ENCODE measurements at regions of chr12 and their contacts with region 1.

Region 1: DNA sequence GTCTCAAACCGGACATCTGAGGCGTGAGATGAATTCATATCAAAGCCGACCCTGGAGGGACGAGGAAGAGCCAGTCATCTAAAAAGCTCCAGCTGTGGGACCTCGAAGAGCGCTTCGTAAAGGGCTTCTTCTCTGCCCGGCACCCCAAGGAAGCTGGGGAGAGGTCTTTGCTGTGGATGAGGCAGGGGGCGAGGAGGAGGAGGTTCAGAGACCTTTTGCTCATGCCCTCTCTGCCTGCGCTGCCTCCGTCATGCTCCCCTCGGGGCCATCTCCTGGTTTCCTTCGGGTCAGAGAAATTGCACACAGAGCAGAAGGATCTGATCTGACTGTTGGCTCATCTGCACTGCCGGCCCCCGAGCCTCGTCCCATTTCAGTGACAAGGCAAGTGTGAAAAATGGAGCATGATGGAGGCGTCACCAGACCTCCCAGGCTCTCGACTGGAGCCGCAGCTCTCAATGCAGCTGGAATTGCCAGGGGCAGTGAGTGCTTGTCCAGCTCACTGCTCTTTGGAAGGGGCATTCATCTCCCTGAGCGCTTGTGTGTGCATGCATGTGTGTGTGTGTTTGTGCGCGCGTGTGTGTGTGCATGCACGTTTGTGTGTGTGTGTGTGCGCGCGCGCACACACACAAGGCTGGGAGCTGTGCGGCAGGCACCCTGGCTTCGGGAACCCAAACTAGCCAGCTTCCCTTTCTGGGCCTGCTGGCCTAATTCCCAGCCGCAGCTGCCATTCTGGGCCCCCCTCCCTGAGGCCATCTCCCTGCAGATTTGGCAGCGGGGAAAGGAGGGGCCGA is 9.2 kb downstream of the CABP1 start:
- DNase-seq: no peak
- H3K4me3 ChIP-seq: no peak overlapping the region
- H3K4me3 Mint-ChIP-seq: peak overlapping the region in 3 of 8 donors; percentile 65 to 80 (median 73)
- H3K27ac ChIP-seq: no peak overlapping the region
- H3K27ac Mint-ChIP-seq: no peak overlapping the region
- H3K4me1 ChIP-seq: peaks cover 9% of the 10 kb centered on the region
- H3K4me1 Mint-ChIP-seq: peaks cover 8 to 15% (median 11%) of the 10 kb centered on the region in 4 donors
- H3K27me3 ChIP-seq: peaks cover 23% of the 10 kb centered on the region
- H3K27me3 Mint-ChIP-seq: peaks cover 30 to 39% of the 10 kb centered on the region in 2 donors

Region 2: GRCh38 chr12:120356567-120357030 is 293.0 kb before region 1 on chr12:
- CTCF ChIA-PET with region 1: interaction called, 7 read pairs
- POLR2A ChIA-PET with region 1: no interaction called
- intact Hi-C with region 1: loop called (anchors 1 kb)
- DNase-seq: peak; percentile 59 to 66 (median 63)
- H3K4me3 ChIP-seq: no peak overlapping the region
- H3K4me3 Mint-ChIP-seq: no peak overlapping the region
- H3K27ac ChIP-seq: no peak overlapping the region
- H3K27ac Mint-ChIP-seq: peak overlapping the region in 1 of 7 donors; percentile 57
- H3K4me1 ChIP-seq: no peaks in the 10 kb centered on the region
- H3K4me1 Mint-ChIP-seq: peaks cover 0 to 1% (median 0%) of the 10 kb centered on the region in 4 donors
- H3K27me3 ChIP-seq: no peaks in the 10 kb centered on the region
- H3K27me3 Mint-ChIP-seq: peaks cover 9 to 30% of the 10 kb centered on the region in 2 donors

Region 3: GRCh38 chr12:120580787-120581723 is 68.6 kb before region 1 on chr12 and contains the start of gene POP5:
- CTCF ChIA-PET with region 1: interaction called, 110 read pairs
- POLR2A ChIA-PET with region 1: interaction called, 9 read pairs
- intact Hi-C with region 1: loop called (anchors 1 kb)
- DNase-seq: peak; percentile 90 to 96 (median 91)
- H3K4me3 ChIP-seq: peak within 1 kb of the TSS; percentile 90 to 94
- H3K4me3 Mint-ChIP-seq: peak within 1 kb of the TSS; percentile 96 to 99 (median 98)
- H3K27ac ChIP-seq: peak within 1 kb of the TSS; percentile 72
- H3K27ac Mint-ChIP-seq: peak within 1 kb of the TSS; percentile 92 to 98 (median 96)
- H3K4me1 ChIP-seq: peaks cover 34% of the 10 kb centered on the region
- H3K4me1 Mint-ChIP-seq: peaks cover 17 to 43% (median 37%) of the 10 kb centered on the region in 4 donors
- H3K27me3 ChIP-seq: no peaks in the 10 kb centered on the region
- H3K27me3 Mint-ChIP-seq: no peaks in the 10 kb centered on the region
- total RNA-seq, gene POP5: 70.4 to 70.7 TPM

Region 4: DNA sequence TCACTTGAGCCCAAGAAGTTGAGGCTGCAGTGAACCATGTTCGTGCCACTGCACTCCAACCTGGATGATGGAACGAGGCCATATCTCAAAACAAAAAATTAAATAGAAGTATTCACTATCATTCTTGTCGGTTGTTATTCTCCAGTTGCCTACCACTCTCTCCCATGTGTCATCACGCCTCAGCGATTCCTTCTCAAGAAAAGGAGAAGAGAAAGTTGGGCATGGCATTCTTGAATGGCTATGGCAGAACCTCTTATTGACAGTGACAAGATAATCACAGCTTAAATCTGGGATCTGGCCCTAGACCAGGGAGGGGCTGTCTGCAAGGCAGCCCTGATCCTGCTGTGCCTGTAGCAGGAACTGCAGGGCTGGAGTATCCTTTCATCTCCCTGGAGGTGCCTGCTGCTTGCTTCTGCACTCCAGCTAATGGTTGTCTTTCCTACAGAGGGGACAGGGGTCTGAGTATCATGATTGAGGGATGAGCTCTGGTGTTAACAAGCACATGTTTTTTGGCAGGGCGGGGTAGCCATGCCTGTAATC is 24.5 kb after region 1 on chr12:
- CTCF ChIA-PET with region 1: interaction called, 15 read pairs
- POLR2A ChIA-PET with region 1: no interaction called
- intact Hi-C with region 1: no loop called
- DNase-seq: no peak
- H3K4me3 ChIP-seq: no peak overlapping the region
- H3K4me3 Mint-ChIP-seq: no peak overlapping the region
- H3K27ac ChIP-seq: no peak overlapping the region
- H3K27ac Mint-ChIP-seq: no peak overlapping the region
- H3K4me1 ChIP-seq: peaks cover 5% of the 10 kb centered on the region
- H3K4me1 Mint-ChIP-seq: peaks cover 0 to 13% (median 6%) of the 10 kb centered on the region in 4 donors
- H3K27me3 ChIP-seq: no peaks in the 10 kb centered on the region
- H3K27me3 Mint-ChIP-seq: peaks cover 1 to 2% of the 10 kb centered on the region in 2 donors

Region 5: GRCh38 chr12:120710031-120710804 is 60.6 kb after region 1 on chr12 and contains the start of gene UNC119B:
- CTCF ChIA-PET with region 1: interaction called, 65 read pairs
- POLR2A ChIA-PET with region 1: interaction called, 8 read pairs
- intact Hi-C with region 1: loop called (anchors 1 kb)
- DNase-seq: peak; percentile 66 to 78 (median 70)
- H3K4me3 ChIP-seq: peak within 1 kb of the TSS; percentile 49 to 68
- H3K4me3 Mint-ChIP-seq: peak within 1 kb of the TSS; percentile 89 to 96 (median 94)
- H3K27ac ChIP-seq: peak within 1 kb of the TSS; percentile 78
- H3K27ac Mint-ChIP-seq: peak within 1 kb of the TSS; percentile 83 to 98 (median 93)
- H3K4me1 ChIP-seq: peaks cover 26% of the 10 kb centered on the region
- H3K4me1 Mint-ChIP-seq: peaks cover 17 to 41% (median 32%) of the 10 kb centered on the region in 4 donors
- H3K27me3 ChIP-seq: no peaks in the 10 kb centered on the region
- H3K27me3 Mint-ChIP-seq: no peaks in the 10 kb centered on the region
- total RNA-seq, gene UNC119B: 28.7 to 29.1 TPM

Region 6: GRCh38 chr12:120830052-120830940 is 180.7 kb after region 1 on chr12:
- CTCF ChIA-PET with region 1: no interaction called
- POLR2A ChIA-PET with region 1: no interaction called
- intact Hi-C with region 1: no loop called
- DNase-seq: no peak
- H3K4me3 ChIP-seq: no peak overlapping the region
- H3K4me3 Mint-ChIP-seq: peak overlapping the region in 1 of 8 donors; percentile 3
- H3K27ac ChIP-seq: no peak overlapping the region
- H3K27ac Mint-ChIP-seq: peak overlapping the region in 3 of 7 donors; percentile 6 to 41 (median 33)
- H3K4me1 ChIP-seq: peaks cover 39% of the 10 kb centered on the region
- H3K4me1 Mint-ChIP-seq: peaks cover 34 to 68% (median 46%) of the 10 kb centered on the region in 4 donors
- H3K27me3 ChIP-seq: no peaks in the 10 kb centered on the region
- H3K27me3 Mint-ChIP-seq: no peaks in the 10 kb centered on the region

Region 7: DNA sequence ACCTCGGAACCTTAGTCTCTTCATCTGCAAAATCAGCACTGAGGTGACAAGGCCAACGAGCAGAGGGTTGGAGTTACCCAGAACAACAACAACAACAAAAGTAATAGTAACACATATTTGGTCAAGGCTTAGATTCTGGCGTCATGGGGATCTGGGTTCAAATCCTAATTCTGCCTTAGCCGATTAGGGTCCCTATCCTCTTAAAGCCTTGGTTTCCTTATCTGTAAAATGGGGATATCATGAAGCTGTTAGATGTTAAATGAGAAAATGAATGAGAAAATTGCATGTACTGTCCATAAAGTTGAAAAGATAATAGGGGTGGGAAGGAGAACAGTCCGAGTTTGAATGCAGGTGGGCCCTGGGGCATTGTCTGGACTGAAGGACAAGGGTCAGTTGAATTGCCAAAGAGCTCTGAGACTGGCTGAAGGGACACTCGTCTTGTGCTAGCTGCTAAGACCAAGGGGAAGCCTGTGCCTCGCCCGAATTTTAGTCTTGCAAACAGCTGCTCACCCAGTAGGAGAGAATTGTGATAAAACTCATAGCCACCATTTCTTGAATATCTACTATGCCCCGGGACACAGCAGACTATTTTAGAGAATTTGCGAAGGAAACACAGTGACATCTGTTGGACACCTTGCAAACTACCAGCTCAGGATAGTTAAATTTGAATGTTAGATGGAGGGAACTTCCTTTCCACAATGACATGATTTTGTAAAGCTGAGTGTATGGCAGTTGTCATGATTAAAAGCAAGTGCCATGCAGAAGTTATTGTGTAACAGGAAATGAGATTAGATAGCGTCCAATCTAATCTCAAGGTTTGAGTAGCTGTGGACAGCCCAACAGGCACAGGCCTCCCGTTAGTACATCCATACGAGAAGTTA is 321.9 kb after region 1 on chr12:
- CTCF ChIA-PET with region 1: interaction called, 115 read pairs
- POLR2A ChIA-PET with region 1: interaction called, 3 read pairs
- intact Hi-C with region 1: loop called (anchors 1 kb)
- DNase-seq: peak in 4 of 5 donors; percentile 59 to 68 (median 62)
- H3K4me3 ChIP-seq: no peak overlapping the region
- H3K4me3 Mint-ChIP-seq: no peak overlapping the region
- H3K27ac ChIP-seq: no peak overlapping the region
- H3K27ac Mint-ChIP-seq: peak overlapping the region in 2 of 7 donors; percentile 37 to 51
- H3K4me1 ChIP-seq: peaks cover 3% of the 10 kb centered on the region
- H3K4me1 Mint-ChIP-seq: peaks cover 6 to 9% (median 6%) of the 10 kb centered on the region in 4 donors
- H3K27me3 ChIP-seq: no peaks in the 10 kb centered on the region
- H3K27me3 Mint-ChIP-seq: no peaks in the 10 kb centered on the region

Region 8: DNA sequence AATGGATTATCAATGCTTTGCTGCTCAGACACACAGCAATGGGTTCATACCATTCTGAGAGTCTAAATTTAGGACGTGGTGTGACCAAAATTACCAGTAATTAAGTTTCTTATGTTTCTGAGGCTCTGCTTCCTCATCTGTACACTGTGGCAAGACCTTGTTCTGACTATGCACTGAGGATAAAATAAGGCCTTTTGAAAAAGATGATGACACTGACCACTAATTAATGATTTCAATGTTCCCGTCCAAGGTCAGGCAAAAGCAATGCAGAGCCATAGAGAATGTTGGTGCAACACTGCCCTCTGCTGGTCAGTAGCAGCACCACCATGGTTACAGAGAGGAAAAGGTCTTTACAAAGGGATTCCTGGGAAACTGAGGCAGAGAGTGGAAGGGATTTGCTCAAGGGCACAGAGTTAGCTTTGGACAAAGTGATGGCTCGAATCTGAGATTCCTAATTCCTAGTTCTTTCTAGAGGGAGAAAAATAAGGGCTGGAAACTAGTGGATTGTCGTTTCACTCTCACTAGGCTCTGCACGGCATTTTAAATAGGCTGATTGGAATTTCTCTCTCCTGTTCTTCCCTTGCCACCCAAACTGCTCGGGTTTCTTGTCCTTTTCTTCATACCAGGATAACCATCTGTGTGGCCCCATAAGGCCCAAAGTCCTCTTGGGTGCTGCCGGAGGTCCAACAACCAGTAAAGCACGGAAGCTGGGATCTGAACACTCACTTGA is 460.7 kb after region 1 on chr12:
- CTCF ChIA-PET with region 1: interaction called, 8 read pairs
- POLR2A ChIA-PET with region 1: no interaction called
- intact Hi-C with region 1: loop called (anchors 1 kb)
- DNase-seq: peak in 4 of 5 donors; percentile 50 to 56 (median 54)
- H3K4me3 ChIP-seq: no peak overlapping the region
- H3K4me3 Mint-ChIP-seq: no peak overlapping the region
- H3K27ac ChIP-seq: no peak overlapping the region
- H3K27ac Mint-ChIP-seq: peak overlapping the region in 2 of 7 donors; percentile 2 to 3
- H3K4me1 ChIP-seq: no peaks in the 10 kb centered on the region
- H3K4me1 Mint-ChIP-seq: peaks cover 0 to 5% (median 4%) of the 10 kb centered on the region in 4 donors
- H3K27me3 ChIP-seq: no peaks in the 10 kb centered on the region
- H3K27me3 Mint-ChIP-seq: no peaks in the 10 kb centered on the region